ENCODE measurements at regions of chr2 and their contacts with region 1.

Region 1: DNA sequence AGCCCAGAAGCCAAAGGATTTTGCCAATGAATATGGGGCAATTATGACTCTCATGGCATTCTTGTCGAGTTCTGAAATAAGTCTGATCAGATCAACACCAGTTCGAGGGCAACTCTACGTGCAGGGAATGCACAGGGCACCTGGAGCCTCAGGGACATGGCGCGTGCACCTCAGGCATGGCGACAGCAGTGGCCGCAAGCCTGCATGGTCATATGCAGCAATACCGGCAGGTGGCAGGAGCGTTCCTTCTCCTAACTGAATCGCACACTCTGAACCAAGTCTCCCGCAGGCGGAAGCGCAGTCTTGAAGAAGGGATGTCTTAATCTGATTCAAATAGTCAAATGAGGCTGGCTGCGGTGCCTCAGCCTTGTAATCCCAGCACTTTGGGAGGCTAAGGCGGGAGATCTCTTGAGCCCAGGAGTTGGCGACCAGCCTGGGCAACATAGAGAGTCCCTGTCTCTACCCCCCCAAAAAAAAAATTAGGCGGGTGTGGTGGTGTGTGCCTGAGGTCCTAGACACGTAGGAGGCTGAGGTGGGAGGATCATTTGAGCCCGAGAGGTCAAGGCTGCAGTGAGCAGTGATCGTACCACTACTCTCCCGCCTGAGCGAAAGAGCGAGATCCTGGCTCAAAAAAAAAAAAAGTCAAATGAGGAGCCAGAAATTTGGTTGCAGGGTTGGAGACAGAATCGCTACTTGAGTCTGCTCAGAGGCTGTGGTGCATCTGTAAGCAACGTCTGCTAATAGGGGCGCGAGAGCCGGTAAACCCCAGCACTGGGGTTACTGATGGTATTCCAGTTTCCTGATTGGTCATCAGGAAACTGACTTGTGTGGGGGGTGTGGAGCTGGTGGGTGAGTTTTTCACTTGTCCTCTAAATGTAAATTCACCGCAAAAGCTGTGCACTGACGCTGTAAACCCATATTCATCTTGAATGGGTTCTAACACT is 28.8 kb downstream of the FHL2 start:
- DNase-seq: peak; percentile 90
- ATAC-seq: peak; percentile 28

Region 2: DNA sequence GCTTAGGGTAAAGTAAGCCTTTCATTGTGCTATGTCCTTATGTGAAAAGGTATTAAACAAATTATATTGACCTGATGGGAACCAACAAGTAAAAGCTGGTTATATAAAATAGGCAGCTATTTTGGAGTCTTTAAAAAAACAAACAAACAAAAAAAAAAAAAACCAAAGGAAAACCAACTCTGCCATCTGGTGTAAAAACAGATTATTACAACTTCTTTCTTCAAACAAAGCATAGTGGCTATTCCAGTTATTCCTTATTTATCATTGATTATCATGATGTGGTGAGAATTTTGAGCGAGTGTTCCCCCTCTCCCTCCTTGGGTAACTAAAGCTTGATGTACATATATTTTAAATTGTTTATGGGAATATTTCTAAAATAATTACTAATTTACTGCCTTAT is 151.2 kb after region 1 on chr2:
- intact Hi-C with region 1: loop called (anchors 5 kb)
- DNase-seq: no peak
- ATAC-seq: no peak

Measured in Right ventricle myocardium superior (tissue), 1 donor.